Endothelial cell of umbilical vein (primary cell): ENCODE measurements at regions of chr1 and their contacts with region 1.

Region 1: GRCh38 chr1:175154629-175155472 is 37.7 kb downstream of the KIAA0040 start:
- DNase-seq: peak; percentile 72
- H3K4me3 ChIP-seq: no peak overlapping the region
- H3K27ac ChIP-seq: no peak overlapping the region
- H3K4me1 ChIP-seq: no peaks in the 10 kb centered on the region
- H3K27me3 ChIP-seq: peaks cover 0 to 20% of the 10 kb centered on the region in 2 experiments
- CTCF ChIP-seq: peak; percentile 78 to 80
- POLR2A ChIP-seq: no peak

Region 2: GRCh38 chr1:175062858-175063257 is 92.0 kb before region 1 on chr1:
- CTCF ChIA-PET with region 1: no interaction called
- POLR2A ChIA-PET with region 1: no interaction called
- dilution Hi-C with region 1: no loop called
- intact Hi-C with region 1: no loop called
- DNase-seq: no peak
- H3K4me3 ChIP-seq: no peak overlapping the region
- H3K27ac ChIP-seq: no peak overlapping the region
- H3K4me1 ChIP-seq: no peaks in the 10 kb centered on the region
- H3K27me3 ChIP-seq: peaks cover 0 to 2% of the 10 kb centered on the region in 2 experiments
- CTCF ChIP-seq: no peak
- POLR2A ChIP-seq: no peak

Region 3: DNA sequence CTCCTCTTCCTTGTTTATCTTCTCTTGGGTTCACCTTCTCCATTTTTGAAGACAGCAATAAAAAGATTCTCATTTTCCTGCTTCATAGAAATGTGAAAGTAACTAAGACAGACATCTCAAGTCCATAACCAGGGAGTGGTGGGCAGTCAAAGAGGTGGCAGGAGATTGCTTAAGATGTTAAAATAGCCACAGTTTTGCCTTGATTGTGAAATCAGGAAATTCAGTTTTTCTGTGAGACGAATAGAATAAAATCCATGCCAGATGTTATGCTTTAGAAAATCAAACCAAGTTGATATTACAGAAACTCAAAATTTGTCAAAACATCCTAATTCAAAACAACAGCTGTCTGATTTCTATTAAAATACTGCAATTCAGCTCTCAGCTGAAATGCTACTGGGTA is 30.0 kb before region 1 on chr1:
- CTCF ChIA-PET with region 1: interaction called, 28 read pairs
- POLR2A ChIA-PET with region 1: no interaction called
- dilution Hi-C with region 1: no loop called
- intact Hi-C with region 1: no loop called
- DNase-seq: no peak
- H3K4me3 ChIP-seq: no peak overlapping the region
- H3K27ac ChIP-seq: no peak overlapping the region
- H3K4me1 ChIP-seq: no peaks in the 10 kb centered on the region
- H3K27me3 ChIP-seq: peaks cover 0 to 2% of the 10 kb centered on the region in 2 experiments
- CTCF ChIP-seq: no peak
- POLR2A ChIP-seq: no peak

Region 4: GRCh38 chr1:175192630-175193526 is 38.0 kb after region 1 on chr1 and contains the start of gene KIAA0040:
- CTCF ChIA-PET with region 1: interaction called, 17 read pairs
- POLR2A ChIA-PET with region 1: no interaction called
- dilution Hi-C with region 1: no loop called
- intact Hi-C with region 1: loop called (anchors 1 kb)
- DNase-seq: peak; percentile 62
- H3K4me3 ChIP-seq: peak within 1 kb of the TSS; percentile 62 to 93 (median 87)
- H3K27ac ChIP-seq: peak within 1 kb of the TSS; percentile 75
- H3K4me1 ChIP-seq: peaks cover 20% of the 10 kb centered on the region
- H3K27me3 ChIP-seq: no peaks in the 10 kb centered on the region
- CTCF ChIP-seq: peak in 1 of 2 donors; percentile 24
- POLR2A ChIP-seq: no peak
- total RNA-seq, gene KIAA0040: 10.9 and 21.5 TPM in 2 replicates

Region 5: DNA sequence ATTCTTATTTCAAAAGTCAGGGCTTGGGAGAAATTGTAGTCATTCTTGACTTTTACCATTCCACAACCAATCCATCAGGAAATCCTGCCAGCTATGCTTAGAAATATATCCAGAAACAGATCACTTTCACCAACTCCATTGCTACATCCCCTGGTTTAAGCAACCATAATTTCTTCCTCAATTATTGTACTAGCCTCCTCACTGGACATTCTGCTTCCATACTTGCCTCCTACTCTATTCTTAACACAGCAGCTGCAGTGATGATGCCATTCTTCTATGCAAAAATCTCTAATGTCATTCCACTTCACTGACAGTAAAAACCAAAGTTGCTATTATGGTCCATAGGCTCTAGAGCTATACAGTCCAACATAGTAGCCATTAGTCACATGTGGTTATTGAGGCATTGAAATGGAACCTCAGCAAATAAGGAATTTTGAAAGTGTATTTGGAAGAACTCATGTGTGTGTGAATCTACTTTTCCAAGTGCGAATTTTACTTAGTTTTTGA is 148.4 kb after region 1 on chr1:
- CTCF ChIA-PET with region 1: interaction called, 11 read pairs
- POLR2A ChIA-PET with region 1: no interaction called
- dilution Hi-C with region 1: no loop called
- intact Hi-C with region 1: no loop called
- DNase-seq: no peak
- H3K4me3 ChIP-seq: no peak overlapping the region
- H3K27ac ChIP-seq: no peak overlapping the region
- H3K4me1 ChIP-seq: no peaks in the 10 kb centered on the region
- H3K27me3 ChIP-seq: peaks cover 0 to 12% of the 10 kb centered on the region in 2 experiments
- CTCF ChIP-seq: no peak
- POLR2A ChIP-seq: no peak

Region 6: GRCh38 chr1:175331891-175332290 is 177.0 kb after region 1 on chr1:
- CTCF ChIA-PET with region 1: interaction called, 11 read pairs
- POLR2A ChIA-PET with region 1: no interaction called
- dilution Hi-C with region 1: no loop called
- intact Hi-C with region 1: no loop called
- DNase-seq: no peak
- H3K4me3 ChIP-seq: no peak overlapping the region
- H3K27ac ChIP-seq: no peak overlapping the region
- H3K4me1 ChIP-seq: peaks cover 6% of the 10 kb centered on the region
- H3K27me3 ChIP-seq: peaks cover 0 to 6% of the 10 kb centered on the region in 2 experiments
- CTCF ChIP-seq: no peak
- POLR2A ChIP-seq: no peak

Region 7: GRCh38 chr1:175481126-175482066 is 326.5 kb after region 1 on chr1:
- CTCF ChIA-PET with region 1: interaction called, 7 read pairs
- POLR2A ChIA-PET with region 1: no interaction called
- dilution Hi-C with region 1: no loop called
- intact Hi-C with region 1: loop called (anchors 1 kb)
- DNase-seq: peak; percentile 59
- H3K4me3 ChIP-seq: no peak overlapping the region
- H3K27ac ChIP-seq: no peak overlapping the region
- H3K4me1 ChIP-seq: peaks cover 14% of the 10 kb centered on the region
- H3K27me3 ChIP-seq: peaks cover 15 to 16% of the 10 kb centered on the region in 2 experiments
- CTCF ChIP-seq: peak; percentile 44 to 47
- POLR2A ChIP-seq: no peak

Region 8: GRCh38 chr1:175887981-175888433 is 733.2 kb after region 1 on chr1:
- CTCF ChIA-PET with region 1: interaction called, 6 read pairs
- POLR2A ChIA-PET with region 1: no interaction called
- dilution Hi-C with region 1: no loop called
- intact Hi-C with region 1: loop called (anchors 2 kb)
- DNase-seq: peak; percentile 44
- H3K4me3 ChIP-seq: no peak overlapping the region
- H3K27ac ChIP-seq: no peak overlapping the region
- H3K4me1 ChIP-seq: no peaks in the 10 kb centered on the region
- H3K27me3 ChIP-seq: peaks cover 0 to 2% of the 10 kb centered on the region in 2 experiments
- CTCF ChIP-seq: peak; percentile 81 to 96
- POLR2A ChIP-seq: no peak